ENCODE measurements at regions of chr10 and their contacts with region 1.

Region 1: GRCh38 chr10:59872892-59873463 is 33.4 kb downstream of the CCDC6 start:
- DNase-seq: peak; percentile 54 to 93
- H3K4me3 ChIP-seq: peak overlapping the region; percentile 20 to 57
- H3K27ac ChIP-seq: peak overlapping the region; percentile 75 to 84
- H3K4me1 ChIP-seq: peaks cover 5 to 45% of the 10 kb centered on the region in 2 donors
- H3K27me3 ChIP-seq: no peaks in the 10 kb centered on the region
- CTCF ChIP-seq: no peak

Region 2: GRCh38 chr10:59843748-59844147 is 29.2 kb before region 1 on chr10:
- intact Hi-C with region 1: loop called (anchors 2 kb)
- DNase-seq: no peak
- H3K4me3 ChIP-seq: no peak overlapping the region
- H3K27ac ChIP-seq: peak overlapping the region; percentile 61 to 79
- H3K4me1 ChIP-seq: peaks cover 5 to 18% of the 10 kb centered on the region in 2 donors
- H3K27me3 ChIP-seq: no peaks in the 10 kb centered on the region
- CTCF ChIP-seq: no peak

Measured in ascending aorta (tissue), 2 donors.